ENCODE measurements at regions of chr21 and their contacts with region 1.

Region 1: DNA sequence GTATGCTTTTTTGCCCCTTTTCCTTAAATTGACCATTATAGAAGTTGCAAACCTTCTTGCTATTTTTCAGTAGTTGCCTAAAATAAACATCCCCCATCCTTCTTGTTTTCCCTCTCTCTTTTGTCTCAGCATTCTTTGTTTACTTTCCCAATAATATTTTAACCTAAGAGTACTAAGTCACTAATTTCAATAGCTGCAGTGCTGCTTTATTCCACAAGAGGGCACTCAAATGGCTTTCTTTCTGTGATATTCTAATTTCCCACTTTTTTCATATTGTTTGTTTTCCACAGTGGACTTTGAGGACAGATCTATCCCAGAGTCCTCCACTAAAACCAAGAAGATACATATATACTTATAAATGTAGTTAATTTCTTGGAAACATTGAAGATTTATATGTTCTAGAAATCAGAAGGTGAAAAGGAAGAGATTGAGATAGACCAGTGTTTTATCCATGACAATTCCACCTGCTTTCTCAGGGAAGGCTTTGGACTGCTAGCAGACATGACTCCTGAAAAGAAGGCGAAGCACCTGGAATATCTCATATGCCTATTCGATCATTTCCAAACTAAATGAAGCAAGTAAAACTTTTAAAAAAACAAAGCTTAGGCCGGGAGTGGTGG is 104.8 kb upstream of the GRIK1 start:
- DNase-seq: no peak

Region 2: DNA sequence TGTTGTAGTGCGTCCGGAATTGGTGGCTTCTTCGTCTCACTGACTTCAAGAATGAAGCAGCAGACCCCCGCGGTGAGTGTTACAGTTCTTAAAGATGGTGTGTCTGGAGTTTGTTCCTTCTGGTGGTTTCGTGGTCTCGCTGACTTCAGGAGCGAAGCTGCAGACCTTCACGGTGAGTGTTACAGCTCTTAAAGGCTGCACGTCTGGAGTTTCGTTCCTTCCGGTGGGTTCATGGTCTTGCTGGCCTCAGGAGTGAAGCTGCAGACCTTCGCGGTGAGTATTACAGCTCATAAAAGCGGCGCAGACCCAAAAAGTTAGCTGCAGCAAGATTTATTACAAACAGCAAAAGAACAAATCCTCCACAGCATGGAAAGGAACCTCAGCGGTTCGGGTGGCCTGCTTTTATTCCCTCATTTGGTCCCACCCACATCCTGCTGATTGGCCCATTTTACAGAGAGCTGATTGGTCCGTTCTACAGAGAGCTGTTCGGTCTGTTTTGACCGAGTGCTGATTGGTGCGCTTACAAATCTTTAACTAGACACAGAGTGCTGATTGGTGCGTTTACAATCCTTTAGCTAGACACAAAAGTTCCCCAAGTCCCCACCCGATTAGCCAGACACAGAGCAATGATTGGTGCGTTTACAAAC is 1043.2 kb after region 1 on chr21:
- intact Hi-C with region 1: loop called (anchors 2 kb)
- DNase-seq: no peak

Measured in posterior cingulate gyrus (tissue), 11 donors.